Activated T-helper 1 cell treated with anti-CD3 and anti-CD28 coated beads, Interleukin-12 subunit alpha, Interleukin-12 subunit beta, Interleukin-2, Interleukin-4 antibody, amounts not matched to agents 30 ng/mL and 10 ng/mL and 1 ng/mL, durations not matched to agents 14 hours and 24 hours and 36 hours (primary cell): ENCODE measurements at regions of chr5 and their contacts with region 1.

Region 1: DNA sequence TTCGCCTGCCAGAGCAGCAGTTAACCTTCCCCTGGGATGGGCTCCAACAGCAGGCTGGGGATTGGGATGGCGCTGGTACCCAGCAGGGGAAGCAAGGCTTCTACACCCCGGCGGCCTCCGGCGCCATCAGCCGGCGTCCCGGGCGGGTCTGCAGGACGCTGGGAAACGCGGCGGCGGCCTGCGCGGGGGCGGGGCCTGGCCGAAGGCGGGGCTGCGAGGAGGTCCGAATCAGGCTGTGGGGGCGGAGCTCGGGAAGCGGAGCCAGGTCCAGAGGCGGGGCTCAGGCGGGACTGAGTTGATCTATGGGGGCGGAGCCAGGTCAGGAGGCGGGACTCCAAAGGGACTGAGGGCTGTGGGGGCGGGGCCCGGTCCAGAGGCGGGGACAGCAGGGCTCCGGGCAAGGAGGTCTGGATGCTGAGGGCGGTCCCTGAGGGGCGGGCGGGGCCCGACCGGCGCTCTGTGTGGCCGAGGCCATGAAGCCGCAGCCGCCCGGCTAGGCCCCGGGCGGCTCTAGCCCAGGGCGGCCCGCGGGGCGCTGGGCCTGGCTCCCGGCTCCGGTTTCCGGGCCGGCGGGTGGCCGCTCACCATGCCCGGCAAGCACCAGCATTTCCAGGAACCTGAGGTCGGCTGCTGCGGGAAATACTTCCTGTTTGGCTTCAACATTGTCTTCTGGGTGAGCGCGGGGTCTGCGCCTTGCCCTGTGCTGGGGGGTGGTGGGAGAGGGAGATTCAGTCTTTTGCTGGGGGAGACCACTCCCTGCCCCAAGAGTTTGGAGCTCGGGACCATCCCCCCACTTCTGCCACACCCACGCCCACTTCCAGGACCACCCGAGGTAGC is at the start of gene TSPAN17:
- DNase-seq: peak; percentile 99
- H3K4me3 Mint-ChIP-seq: peak within 1 kb of the TSS; percentile 88
- H3K27ac Mint-ChIP-seq: peak within 1 kb of the TSS; percentile 93
- H3K4me1 Mint-ChIP-seq: peaks cover 49% of the 10 kb centered on the region
- H3K27me3 Mint-ChIP-seq: no peaks in the 10 kb centered on the region
- total RNA-seq, gene TSPAN17: 34.1 and 35.3 TPM in 2 replicates

Region 2: DNA sequence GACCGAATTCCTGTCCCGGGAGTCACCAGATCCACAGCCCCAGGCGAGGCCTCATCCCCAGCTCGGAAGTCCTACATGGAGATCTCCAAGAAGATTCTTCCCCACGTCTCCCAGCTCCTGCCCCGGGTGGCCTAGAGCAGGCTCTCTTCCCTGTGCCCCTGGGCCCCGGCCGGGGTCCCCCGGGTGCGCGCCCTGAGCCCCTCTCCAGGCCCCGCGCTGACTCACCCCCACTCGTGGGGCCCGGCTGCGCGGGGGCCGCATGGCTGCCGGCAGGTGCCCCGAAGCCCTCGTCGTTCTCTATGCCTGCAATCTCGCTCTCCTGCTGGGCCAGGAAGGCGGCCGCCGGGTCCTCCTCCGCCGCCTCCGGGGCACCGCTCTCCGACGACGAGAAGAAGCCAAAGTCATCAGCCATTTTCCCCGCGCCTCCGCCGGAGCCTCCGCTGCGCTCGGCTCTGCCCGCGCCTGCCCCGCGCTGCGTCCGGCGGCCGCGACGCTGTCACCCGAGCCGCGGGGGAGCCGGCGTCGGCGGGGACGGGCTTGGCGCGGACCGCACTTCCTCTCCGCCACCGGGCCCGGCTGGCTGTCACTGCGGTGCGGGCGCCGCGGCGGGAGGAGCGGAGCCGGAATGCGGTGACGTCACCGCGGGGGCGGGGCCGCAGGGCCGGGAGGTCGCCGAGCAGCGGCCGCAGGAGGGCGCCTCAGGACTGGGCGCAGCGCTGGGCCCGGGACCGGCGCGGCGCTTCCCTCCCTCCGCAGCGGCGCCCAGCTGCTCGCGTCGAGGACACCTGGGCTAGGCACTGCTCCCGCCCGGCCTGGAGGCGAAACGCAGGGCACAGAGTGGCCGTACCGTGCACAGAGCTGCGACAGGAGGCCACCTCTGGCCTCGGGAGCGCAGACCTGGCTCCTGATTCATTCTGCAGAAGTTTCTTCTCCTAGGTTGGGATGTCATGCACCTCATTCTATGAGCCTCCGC is 231.0 kb before region 1 on chr5 and contains the start of gene CLTB:
- intact Hi-C with region 1: loop called (anchors 5 kb)
- DNase-seq: peak; percentile 76
- H3K4me3 Mint-ChIP-seq: peak within 1 kb of the TSS; percentile 84
- H3K27ac Mint-ChIP-seq: peak within 1 kb of the TSS; percentile 44
- H3K4me1 Mint-ChIP-seq: peaks cover 38% of the 10 kb centered on the region
- H3K27me3 Mint-ChIP-seq: peaks cover 14% of the 10 kb centered on the region
- total RNA-seq, gene CLTB: 71.6 and 84.0 TPM in 2 replicates

Region 3: GRCh38 chr5:176573564-176574296 is 73.5 kb before region 1 on chr5:
- intact Hi-C with region 1: loop called (anchors 2 kb)
- DNase-seq: peak; percentile 58
- H3K4me3 Mint-ChIP-seq: no peak overlapping the region
- H3K27ac Mint-ChIP-seq: no peak overlapping the region
- H3K4me1 Mint-ChIP-seq: no peaks in the 10 kb centered on the region
- H3K27me3 Mint-ChIP-seq: peaks cover 5% of the 10 kb centered on the region

Region 4: GRCh38 chr5:176629853-176630712 is 17.2 kb before region 1 on chr5 and contains the starts of genes EIF4E1B and SNCB:
- intact Hi-C with region 1: loop called (anchors 1 kb)
- DNase-seq: peak; percentile 31
- H3K4me3 Mint-ChIP-seq: peak within 1 kb of the TSS; percentile 28
- H3K27ac Mint-ChIP-seq: no peak within 1 kb of the TSS
- H3K4me1 Mint-ChIP-seq: peaks cover 14% of the 10 kb centered on the region
- H3K27me3 Mint-ChIP-seq: peaks cover 80% of the 10 kb centered on the region
- total RNA-seq, gene EIF4E1B: not detected in 2 replicates
- total RNA-seq, gene SNCB: not detected in 2 replicates

Region 5: GRCh38 chr5:177311723-177312648 is 664.7 kb after region 1 on chr5 and contains the start of gene MXD3:
- intact Hi-C with region 1: loop called (anchors 2 kb)
- DNase-seq: peak; percentile 96
- H3K4me3 Mint-ChIP-seq: peak within 1 kb of the TSS; percentile 89
- H3K27ac Mint-ChIP-seq: peak within 1 kb of the TSS; percentile 85
- H3K4me1 Mint-ChIP-seq: peaks cover 44% of the 10 kb centered on the region
- H3K27me3 Mint-ChIP-seq: no peaks in the 10 kb centered on the region
- total RNA-seq, gene MXD3: 9.6 and 11.8 TPM in 2 replicates